ENCODE measurements at regions of chr15 and their contacts with region 1.

Region 1: GRCh38 chr15:66789029-66790025 is 87.3 kb downstream of the SMAD6 start:
- DNase-seq: no peak
- H3K4me3 ChIP-seq: no peak overlapping the region
- H3K27ac ChIP-seq: no peak overlapping the region
- H3K4me1 ChIP-seq: no peaks in the 10 kb centered on the region
- H3K27me3 ChIP-seq: no peaks in the 10 kb centered on the region
- CTCF ChIP-seq: peak; percentile 61 to 72 (median 69)

Region 2: DNA sequence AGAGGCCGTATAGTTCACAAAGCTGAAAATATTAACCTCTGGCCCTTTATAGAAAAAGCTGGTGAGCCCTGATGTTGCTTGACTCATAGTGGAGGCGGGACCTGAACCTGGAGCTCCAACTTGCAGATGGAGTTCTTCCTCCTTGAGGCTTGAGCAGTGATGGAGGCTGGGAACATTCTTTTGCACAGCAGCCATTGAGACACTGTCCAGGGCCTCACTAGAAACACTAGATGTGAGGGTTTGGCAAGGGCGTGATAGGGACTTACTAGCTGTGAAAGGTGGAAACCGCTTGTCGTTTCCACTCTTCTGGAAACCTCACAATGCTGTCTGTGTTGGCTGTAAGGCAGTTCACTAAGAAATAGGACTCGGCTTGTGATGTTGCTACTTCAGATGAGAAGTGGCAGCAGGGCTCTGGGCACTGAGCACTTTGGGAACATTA is 74.8 kb before region 1 on chr15:
- dilution Hi-C with region 1: loop called (anchors 5 kb)
- DNase-seq: no peak
- H3K4me3 ChIP-seq: no peak overlapping the region
- H3K27ac ChIP-seq: no peak overlapping the region
- H3K4me1 ChIP-seq: no peaks in the 10 kb centered on the region
- H3K27me3 ChIP-seq: peaks cover 9% of the 10 kb centered on the region
- CTCF ChIP-seq: no peak